ENCODE measurements at regions of chr5 and their contacts with region 1.

Region 1: GRCh38 chr5:135950611-135951010 is 4.2 kb downstream of the LECT2 start:
- DNase-seq: no peak
- H3K4me3 ChIP-seq: no peak overlapping the region
- H3K4me3 Mint-ChIP-seq: no peak overlapping the region
- H3K27ac Mint-ChIP-seq: no peak overlapping the region
- H3K4me1 ChIP-seq: peaks cover 25% of the 10 kb centered on the region
- H3K4me1 Mint-ChIP-seq: peaks cover 16% of the 10 kb centered on the region
- H3K27me3 ChIP-seq: no peaks in the 10 kb centered on the region
- H3K27me3 Mint-ChIP-seq: no peaks in the 10 kb centered on the region
- CTCF ChIP-seq: no peak

Region 2: GRCh38 chr5:135971701-135972100 is 21.1 kb after region 1 on chr5:
- CTCF ChIA-PET with region 1: interaction called, 4 read pairs
- POLR2A ChIA-PET with region 1: no interaction called
- intact Hi-C with region 1: loop called (anchors 1 kb)
- DNase-seq: peak; percentile 42
- H3K4me3 ChIP-seq: no peak overlapping the region
- H3K4me3 Mint-ChIP-seq: no peak overlapping the region
- H3K27ac Mint-ChIP-seq: no peak overlapping the region
- H3K4me1 ChIP-seq: peaks cover 20% of the 10 kb centered on the region
- H3K4me1 Mint-ChIP-seq: no peaks in the 10 kb centered on the region
- H3K27me3 ChIP-seq: no peaks in the 10 kb centered on the region
- H3K27me3 Mint-ChIP-seq: no peaks in the 10 kb centered on the region
- CTCF ChIP-seq: no peak

Region 3: DNA sequence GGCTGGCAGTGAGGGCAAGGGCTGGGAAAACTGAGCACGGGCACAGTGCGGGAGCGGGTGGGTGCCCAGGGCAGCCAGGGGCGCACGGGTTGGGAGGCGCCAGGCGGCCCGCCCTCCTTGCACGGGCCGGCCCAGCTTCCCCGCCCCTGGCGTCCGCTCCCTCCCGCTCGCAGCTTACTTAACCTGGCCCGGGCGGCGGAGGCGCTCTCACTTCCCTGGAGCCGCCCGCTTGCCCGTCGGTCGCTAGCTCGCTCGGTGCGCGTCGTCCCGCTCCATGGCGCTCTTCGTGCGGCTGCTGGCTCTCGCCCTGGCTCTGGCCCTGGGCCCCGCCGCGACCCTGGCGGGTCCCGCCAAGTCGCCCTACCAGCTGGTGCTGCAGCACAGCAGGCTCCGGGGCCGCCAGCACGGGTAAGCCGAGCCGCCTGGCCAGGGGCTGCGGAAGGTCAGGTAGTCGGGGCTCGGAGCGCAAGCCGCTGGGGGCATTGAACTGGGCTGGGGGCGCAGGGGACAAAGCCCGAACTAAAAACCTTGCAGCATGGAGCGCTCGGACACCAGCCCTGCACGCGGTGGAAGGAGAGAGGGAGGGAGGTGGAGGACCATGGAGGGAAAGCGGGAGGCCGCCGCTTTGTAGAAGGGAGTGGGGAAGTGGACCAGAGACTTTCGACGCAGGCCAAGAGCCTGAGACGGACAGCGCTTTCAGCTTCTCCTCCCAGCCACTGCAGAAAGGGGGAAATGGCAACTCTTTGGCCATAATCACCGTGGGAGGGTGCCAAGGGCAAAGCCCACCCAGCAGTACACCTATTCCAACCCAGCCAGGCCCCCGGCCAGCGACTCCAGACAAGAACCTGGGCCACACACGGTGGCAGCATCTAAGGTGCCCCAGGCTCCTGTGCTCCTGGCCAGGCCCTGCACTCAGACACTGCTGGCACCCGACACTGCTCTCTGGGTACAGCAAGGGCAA is 78.5 kb after region 1 on chr5 and contains the start of gene TGFBI:
- CTCF ChIA-PET with region 1: no interaction called
- POLR2A ChIA-PET with region 1: interaction called, 3 read pairs
- intact Hi-C with region 1: loop called (anchors 1 kb)
- DNase-seq: peak; percentile 71 to 82
- H3K4me3 ChIP-seq: peak within 1 kb of the TSS; percentile 58
- H3K4me3 Mint-ChIP-seq: peak within 1 kb of the TSS; percentile 74
- H3K27ac Mint-ChIP-seq: no peak within 1 kb of the TSS
- H3K4me1 ChIP-seq: peaks cover 16% of the 10 kb centered on the region; the same call in 1 of the 2 replicates
- H3K4me1 Mint-ChIP-seq: peaks cover 7% of the 10 kb centered on the region
- H3K27me3 ChIP-seq: no peaks in the 10 kb centered on the region
- H3K27me3 Mint-ChIP-seq: no peaks in the 10 kb centered on the region
- CTCF ChIP-seq: peak in 1 of 2 experiments; percentile 44
- total RNA-seq, gene TGFBI: 131 and 142 TPM in 2 replicates

Region 4: DNA sequence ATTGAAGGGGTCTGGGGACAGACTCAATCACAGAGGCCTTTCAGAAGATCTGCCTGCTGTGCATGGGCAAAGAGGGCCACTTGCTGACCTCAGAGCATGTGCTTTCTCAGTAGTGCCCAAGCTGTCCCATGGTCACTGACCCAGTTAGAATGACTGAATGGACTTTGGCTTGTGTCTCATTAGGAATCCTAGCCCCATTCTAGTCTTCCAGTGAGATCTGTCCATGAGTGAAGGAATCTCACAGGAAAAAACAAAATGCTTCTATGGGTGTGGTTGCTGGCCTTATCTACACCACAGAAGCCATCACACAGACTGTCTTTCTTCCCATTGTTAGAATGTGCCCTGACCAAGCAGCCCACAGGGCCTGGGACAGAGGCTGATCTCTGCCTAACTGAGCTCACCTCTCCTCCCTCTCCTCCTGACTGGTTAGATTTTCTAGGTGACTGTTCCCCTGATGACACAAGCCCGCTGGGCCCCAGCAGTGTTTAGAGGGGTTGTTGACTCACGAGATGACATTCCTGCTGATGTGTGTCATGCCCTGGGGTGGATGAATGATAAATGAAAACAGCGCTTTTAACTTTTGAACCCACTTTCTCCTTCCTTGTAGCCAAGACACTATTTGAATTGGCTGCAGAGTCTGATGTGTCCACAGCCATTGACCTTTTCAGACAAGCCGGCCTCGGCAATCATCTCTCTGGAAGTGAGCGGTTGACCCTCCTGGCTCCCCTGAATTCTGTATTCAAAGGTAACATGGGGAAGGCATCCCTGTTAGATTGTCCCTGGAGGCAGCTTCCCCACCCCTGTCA is 102.9 kb after region 1 on chr5:
- CTCF ChIA-PET with region 1: interaction called, 7 read pairs
- POLR2A ChIA-PET with region 1: no interaction called
- intact Hi-C with region 1: loop called (anchors 1 kb)
- DNase-seq: peak; percentile 87 to 93
- H3K4me3 ChIP-seq: no peak overlapping the region
- H3K4me3 Mint-ChIP-seq: peak overlapping the region; percentile 42
- H3K27ac Mint-ChIP-seq: peak overlapping the region; percentile 89
- H3K4me1 ChIP-seq: peaks cover 70% of the 10 kb centered on the region
- H3K4me1 Mint-ChIP-seq: peaks cover 42% of the 10 kb centered on the region
- H3K27me3 ChIP-seq: no peaks in the 10 kb centered on the region
- H3K27me3 Mint-ChIP-seq: no peaks in the 10 kb centered on the region
- CTCF ChIP-seq: no peak

Region 5: DNA sequence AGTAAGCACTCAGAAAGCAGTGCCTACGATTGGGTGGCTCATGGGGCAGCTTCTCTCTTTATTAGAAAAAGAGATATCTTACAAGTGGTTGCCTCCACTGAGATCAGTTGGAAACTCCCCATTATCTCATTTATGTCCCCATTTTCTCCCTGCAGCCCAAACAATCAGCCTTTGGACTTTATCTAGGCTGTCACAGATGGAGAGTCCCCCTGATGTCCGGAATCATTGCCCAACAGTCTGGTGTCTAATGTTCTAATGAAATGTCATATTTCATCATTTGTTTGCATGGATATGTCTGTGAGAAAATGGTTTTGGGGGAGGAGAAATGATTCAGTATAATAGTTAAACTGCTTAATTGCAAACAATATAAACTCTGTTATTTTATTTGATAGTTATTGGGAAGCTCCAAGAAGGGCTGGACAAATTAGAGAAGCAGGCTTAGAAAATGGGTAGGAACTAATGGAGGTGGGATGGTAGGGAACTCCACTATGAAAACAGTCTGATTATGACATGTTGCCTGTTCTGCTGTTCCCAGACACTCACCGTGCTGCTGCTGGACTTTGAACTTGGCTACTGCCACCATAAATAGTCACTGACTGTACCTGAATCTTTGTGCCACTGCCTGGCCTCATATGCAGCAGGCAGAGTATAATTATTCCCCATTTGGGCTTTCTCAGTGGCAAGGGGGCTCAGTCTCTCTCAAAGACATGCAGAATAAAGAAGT is 143.7 kb after region 1 on chr5:
- CTCF ChIA-PET with region 1: no interaction called
- POLR2A ChIA-PET with region 1: no interaction called
- intact Hi-C with region 1: loop called (anchors 1 kb)
- DNase-seq: peak; percentile 51 to 75
- H3K4me3 ChIP-seq: no peak overlapping the region
- H3K4me3 Mint-ChIP-seq: peak overlapping the region; percentile 9
- H3K27ac Mint-ChIP-seq: peak overlapping the region; percentile 69
- H3K4me1 ChIP-seq: peaks cover 65% of the 10 kb centered on the region
- H3K4me1 Mint-ChIP-seq: peaks cover 67% of the 10 kb centered on the region
- H3K27me3 ChIP-seq: no peaks in the 10 kb centered on the region
- H3K27me3 Mint-ChIP-seq: no peaks in the 10 kb centered on the region
- CTCF ChIP-seq: no peak

Region 6: DNA sequence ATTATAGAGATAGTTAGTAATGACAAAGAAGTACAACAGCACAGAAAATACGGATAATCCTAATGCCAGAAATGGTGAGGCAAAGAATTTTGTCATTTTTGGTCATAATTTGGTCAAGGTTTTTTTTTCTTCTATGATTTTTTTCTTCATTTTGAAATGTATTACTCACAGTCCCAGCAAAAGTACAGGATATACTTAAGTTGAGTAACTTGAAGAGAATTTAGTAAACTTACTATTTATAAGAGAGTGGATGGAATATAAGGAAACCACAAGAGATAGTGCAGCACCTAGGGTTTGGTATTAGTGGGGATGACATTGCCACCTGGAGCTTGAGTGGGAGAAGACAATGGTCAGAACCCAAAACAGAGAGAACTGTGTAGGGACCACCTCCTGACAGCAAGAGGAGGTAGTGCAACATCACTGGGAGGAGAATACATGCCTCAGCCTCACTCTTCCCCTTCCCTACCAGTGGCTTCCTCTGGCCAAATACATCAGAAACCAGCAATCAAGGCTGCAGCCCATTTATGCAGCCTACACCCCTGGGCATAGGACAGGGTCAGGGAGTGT is 849.3 kb after region 1 on chr5:
- CTCF ChIA-PET with region 1: no interaction called
- POLR2A ChIA-PET with region 1: no interaction called
- intact Hi-C with region 1: no loop called
- DNase-seq: no peak
- H3K4me3 ChIP-seq: no peak overlapping the region
- H3K4me3 Mint-ChIP-seq: no peak overlapping the region
- H3K27ac Mint-ChIP-seq: no peak overlapping the region
- H3K4me1 ChIP-seq: no peaks in the 10 kb centered on the region
- H3K4me1 Mint-ChIP-seq: no peaks in the 10 kb centered on the region
- H3K27me3 ChIP-seq: no peaks in the 10 kb centered on the region
- H3K27me3 Mint-ChIP-seq: peaks cover 10% of the 10 kb centered on the region
- CTCF ChIP-seq: no peak